OCI-LY7 (cell line): ENCODE measurements at regions of chr6 and their contacts with region 1.

Region 1: GRCh38 chr6:2848851-2849250 is 7.2 kb upstream of the SERPINB1 start:
- DNase-seq: peak; percentile 96
- H3K4me3 ChIP-seq: peak overlapping the region; percentile 74
- H3K27ac ChIP-seq: peak overlapping the region; percentile 96
- H3K4me1 ChIP-seq: peaks cover 64% of the 10 kb centered on the region
- CTCF ChIP-seq: no peak

Region 2: GRCh38 chr6:2866181-2866846 is 17.5 kb after region 1 on chr6:
- CTCF ChIA-PET with region 1: interaction called, 6 read pairs
- POLR2A ChIA-PET with region 1: interaction called, 88 read pairs
- intact Hi-C with region 1: loop called (anchors 1 kb)
- DNase-seq: no peak
- H3K4me3 ChIP-seq: peak overlapping the region; percentile 28
- H3K27ac ChIP-seq: peak overlapping the region; percentile 99
- H3K4me1 ChIP-seq: peaks cover 78% of the 10 kb centered on the region
- CTCF ChIP-seq: no peak

Region 3: DNA sequence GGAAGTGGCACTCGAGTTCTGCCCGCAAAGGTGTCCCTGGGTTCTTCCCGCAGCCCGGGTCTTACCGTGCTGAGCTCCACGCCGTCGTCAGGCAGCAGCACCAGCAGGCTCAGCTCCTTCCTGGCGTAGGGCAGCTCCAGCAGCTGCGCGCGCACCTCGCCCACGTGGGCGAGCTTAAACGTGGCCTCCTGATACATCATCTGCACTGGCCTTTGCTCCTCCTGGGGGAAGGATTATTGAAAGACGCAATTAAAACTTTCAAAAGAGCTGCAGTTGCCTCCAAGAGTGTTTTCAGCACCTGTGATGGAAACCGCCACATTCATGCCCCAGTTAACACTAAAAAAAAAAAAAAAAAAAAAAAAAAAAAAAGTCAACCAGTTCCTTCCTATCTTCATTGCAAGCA is 42.9 kb after region 1 on chr6:
- CTCF ChIA-PET with region 1: interaction called, 4 read pairs
- POLR2A ChIA-PET with region 1: interaction called, 70 read pairs
- intact Hi-C with region 1: loop called (anchors 1 kb)
- DNase-seq: peak; percentile 99
- H3K4me3 ChIP-seq: peak overlapping the region; percentile 73
- H3K27ac ChIP-seq: peak overlapping the region; percentile 97
- H3K4me1 ChIP-seq: peaks cover 91% of the 10 kb centered on the region
- CTCF ChIP-seq: no peak

Region 4: DNA sequence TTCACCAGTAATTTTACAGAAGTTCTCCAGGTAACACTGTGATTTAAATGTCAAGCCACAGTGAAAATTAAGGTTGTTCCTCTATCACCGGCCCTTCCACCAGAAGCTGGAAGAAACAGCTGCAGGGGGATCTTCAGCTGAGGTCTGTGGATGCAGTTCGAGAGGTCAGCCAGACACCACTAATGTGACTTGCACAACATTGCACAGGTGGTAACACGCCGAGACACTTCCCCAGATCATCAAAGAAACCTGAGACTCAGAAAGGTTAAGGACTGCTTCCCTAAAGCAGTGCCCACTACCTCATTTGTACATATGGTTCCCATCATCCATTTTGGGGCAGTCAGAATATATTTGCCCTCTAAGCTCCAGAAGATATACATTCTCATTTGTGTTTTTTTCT is 62.3 kb after region 1 on chr6:
- CTCF ChIA-PET with region 1: interaction called, 5 read pairs
- POLR2A ChIA-PET with region 1: interaction called, 40 read pairs
- intact Hi-C with region 1: loop called (anchors 1 kb)
- DNase-seq: peak; percentile 87
- H3K4me3 ChIP-seq: peak overlapping the region; percentile 43
- H3K27ac ChIP-seq: peak overlapping the region; percentile 87
- H3K4me1 ChIP-seq: peaks cover 57% of the 10 kb centered on the region
- CTCF ChIP-seq: no peak

Region 5: DNA sequence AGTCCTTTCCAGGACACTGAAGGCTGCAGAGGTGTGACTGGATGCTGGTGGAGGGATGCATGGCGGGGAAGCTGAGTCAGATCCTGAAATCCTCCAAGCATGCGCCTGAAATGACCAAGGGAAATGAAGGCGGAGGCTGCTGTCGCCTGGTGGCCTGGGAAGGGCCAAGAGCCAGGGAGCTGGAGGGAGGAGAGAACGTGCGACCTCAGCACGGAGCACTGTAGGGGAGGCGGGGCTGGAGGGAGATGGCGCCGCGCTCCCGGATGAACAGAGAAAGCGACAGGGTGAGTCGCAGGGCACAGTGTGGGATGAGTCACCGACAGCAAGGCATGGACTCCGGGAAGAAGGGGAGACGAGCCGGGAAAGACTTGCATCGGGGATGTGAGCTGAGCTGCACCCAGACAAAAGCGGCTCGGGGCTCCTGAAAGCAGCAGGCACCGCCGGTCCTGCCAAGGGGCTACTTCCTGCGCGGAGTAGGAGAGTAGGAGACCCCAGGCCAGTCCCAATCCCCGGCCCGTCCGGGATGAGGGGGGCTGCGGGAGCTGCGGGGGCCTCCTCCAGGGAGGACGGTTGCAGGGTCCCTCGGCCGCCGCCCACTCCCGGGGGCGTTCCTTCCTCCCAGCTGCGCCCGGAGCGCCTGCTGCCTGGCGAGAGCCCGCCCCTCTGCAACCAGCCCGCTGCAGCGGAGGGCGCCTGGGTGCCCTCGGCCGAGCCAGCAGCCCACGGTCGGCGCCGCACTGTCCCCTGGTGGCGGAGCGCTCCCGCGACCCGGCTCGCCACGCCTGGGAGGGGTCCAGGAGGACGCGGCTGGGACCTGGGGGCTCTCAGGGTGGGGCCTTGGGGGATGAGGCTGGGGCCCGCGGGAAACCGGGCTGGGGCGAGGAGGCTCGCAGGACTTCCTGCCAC is 139.8 kb after region 1 on chr6:
- CTCF ChIA-PET with region 1: interaction called, 6 read pairs
- POLR2A ChIA-PET with region 1: interaction called, 11 read pairs
- intact Hi-C with region 1: loop called (anchors 1 kb)
- DNase-seq: peak; percentile 89
- H3K4me3 ChIP-seq: peak overlapping the region; percentile 75
- H3K27ac ChIP-seq: peak overlapping the region; percentile 89
- H3K4me1 ChIP-seq: peaks cover 16% of the 10 kb centered on the region
- CTCF ChIP-seq: peak; percentile 80

Region 6: GRCh38 chr6:3032986-3033385 is 184.1 kb after region 1 on chr6:
- CTCF ChIA-PET with region 1: no interaction called
- POLR2A ChIA-PET with region 1: no interaction called
- intact Hi-C with region 1: no loop called
- DNase-seq: no peak
- H3K4me3 ChIP-seq: no peak overlapping the region
- H3K27ac ChIP-seq: no peak overlapping the region
- H3K4me1 ChIP-seq: peaks cover 23% of the 10 kb centered on the region
- CTCF ChIP-seq: no peak

Region 7: DNA sequence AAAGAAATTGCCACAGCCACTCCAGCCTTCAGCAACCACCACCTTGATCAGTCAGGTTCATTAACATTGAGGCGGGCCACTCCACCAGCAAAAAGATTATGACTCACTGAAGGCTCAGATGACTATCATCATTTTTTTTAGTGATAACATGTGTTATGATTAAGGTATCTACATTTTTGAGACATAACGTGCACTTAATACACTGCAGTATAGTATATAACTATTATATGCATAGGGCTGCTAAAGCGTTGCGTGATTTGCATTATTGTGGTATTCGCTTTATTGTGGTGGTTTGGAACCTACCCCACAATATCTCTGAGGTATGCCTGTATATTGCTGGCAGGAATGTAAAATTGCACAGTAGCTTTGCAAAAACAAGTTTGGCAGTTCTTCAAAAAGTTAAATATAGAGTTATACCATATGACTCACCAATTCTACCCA is 212.7 kb after region 1 on chr6:
- CTCF ChIA-PET with region 1: no interaction called
- POLR2A ChIA-PET with region 1: interaction called, 11 read pairs
- intact Hi-C with region 1: no loop called
- DNase-seq: peak; percentile 17
- H3K4me3 ChIP-seq: peak overlapping the region; percentile 1
- H3K27ac ChIP-seq: no peak overlapping the region
- H3K4me1 ChIP-seq: peaks cover 23% of the 10 kb centered on the region
- CTCF ChIP-seq: no peak